ENCODE measurements at regions of chr6 and their contacts with region 1.

Region 1: DNA sequence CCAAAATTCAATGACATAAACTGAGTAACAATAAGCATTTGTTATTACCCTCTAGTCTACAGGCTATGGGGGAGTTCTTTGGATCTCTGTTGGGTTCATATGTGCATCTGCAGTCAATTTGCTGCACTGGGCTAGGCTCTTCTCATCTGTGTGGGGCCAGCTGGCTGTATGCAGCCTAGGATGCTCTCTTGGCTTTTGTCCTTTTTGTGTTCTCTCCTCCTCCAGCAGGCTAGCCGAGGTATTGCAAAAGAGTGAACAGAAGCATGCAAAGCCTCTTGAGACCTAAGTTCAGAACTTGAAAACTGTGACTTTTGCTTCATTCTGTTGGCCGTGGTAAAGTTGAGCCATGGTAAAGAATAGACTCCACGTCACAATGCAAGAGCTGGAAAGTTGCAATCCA is 62.8 kb upstream of the FOXO3 start:
- DNase-seq: peak; percentile 34
- H3K4me3 Mint-ChIP-seq: no peak overlapping the region
- H3K27ac Mint-ChIP-seq: no peak overlapping the region
- H3K4me1 Mint-ChIP-seq: no peaks in the 10 kb centered on the region
- H3K27me3 Mint-ChIP-seq: no peaks in the 10 kb centered on the region

Region 2: DNA sequence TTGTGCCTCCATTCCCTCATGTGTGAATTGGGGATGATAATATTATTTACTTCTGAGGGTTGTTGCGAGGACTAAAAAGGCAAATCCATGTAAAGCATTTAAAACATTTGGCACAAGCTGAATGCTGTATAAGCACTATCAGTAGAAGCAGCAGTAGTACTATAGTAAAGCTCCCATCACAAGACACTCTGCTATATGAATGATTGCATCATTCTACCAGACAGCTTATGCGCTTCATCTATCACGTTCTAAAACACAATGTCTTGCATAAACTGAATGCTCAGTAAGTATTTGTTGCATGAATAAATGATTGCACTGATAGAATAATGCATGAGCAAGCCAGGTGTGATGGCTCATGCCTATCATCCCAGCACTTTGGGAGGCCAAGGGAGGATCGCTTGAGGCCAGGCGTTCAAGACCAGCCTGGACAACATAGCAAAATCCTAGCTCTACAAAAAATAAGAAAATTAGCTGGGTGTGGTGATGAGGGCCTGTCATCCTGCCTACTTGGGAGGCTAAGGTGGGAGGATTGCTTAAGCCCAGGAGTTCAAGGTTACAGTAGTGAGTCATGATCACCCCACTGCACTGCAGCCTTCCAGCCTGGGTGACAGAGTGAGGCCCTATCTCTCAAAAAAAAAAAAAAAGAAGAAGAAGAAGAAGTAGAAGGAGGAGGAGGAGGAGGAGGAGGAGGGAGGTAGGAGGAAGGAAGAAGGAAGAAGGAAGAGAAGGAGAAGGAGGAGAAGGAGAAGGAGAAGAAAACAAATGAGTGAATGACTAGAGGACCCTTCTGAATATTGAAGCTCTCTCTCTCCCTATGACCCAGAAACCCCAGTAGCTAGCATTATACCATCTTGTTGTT is 12.8 kb after region 1 on chr6:
- CTCF ChIA-PET with region 1: interaction called, 4 read pairs
- POLR2A ChIA-PET with region 1: interaction called, 11 read pairs
- DNase-seq: no peak
- H3K4me3 Mint-ChIP-seq: no peak overlapping the region
- H3K27ac Mint-ChIP-seq: peak overlapping the region; percentile 9
- H3K4me1 Mint-ChIP-seq: no peaks in the 10 kb centered on the region
- H3K27me3 Mint-ChIP-seq: peaks cover 4% of the 10 kb centered on the region

Region 3: GRCh38 chr6:109623288-109623687 is 1125.4 kb after region 1 on chr6:
- CTCF ChIA-PET with region 1: no interaction called
- POLR2A ChIA-PET with region 1: no interaction called
- DNase-seq: no peak
- H3K4me3 Mint-ChIP-seq: no peak overlapping the region
- H3K27ac Mint-ChIP-seq: no peak overlapping the region
- H3K4me1 Mint-ChIP-seq: peaks cover 3% of the 10 kb centered on the region
- H3K27me3 Mint-ChIP-seq: no peaks in the 10 kb centered on the region

Measured in activated CD4-positive, alpha-beta T cell treated with anti-CD3 and anti-CD28 coated beads, Interleukin-2, amount 10 ng/mL, durations not matched to agents 7 days and 5 days (primary cell).